ENCODE measurements at regions of chr2 and their contacts with region 1.

Region 1: GRCh38 chr2:56009758-56010458 is 86.3 kb upstream of the EFEMP1 start:
- H3K4me3 ChIP-seq: no peak overlapping the region
- H3K27ac ChIP-seq: no peak overlapping the region
- H3K4me1 ChIP-seq: no peaks in the 10 kb centered on the region
- CTCF ChIP-seq: no peak

Region 2: DNA sequence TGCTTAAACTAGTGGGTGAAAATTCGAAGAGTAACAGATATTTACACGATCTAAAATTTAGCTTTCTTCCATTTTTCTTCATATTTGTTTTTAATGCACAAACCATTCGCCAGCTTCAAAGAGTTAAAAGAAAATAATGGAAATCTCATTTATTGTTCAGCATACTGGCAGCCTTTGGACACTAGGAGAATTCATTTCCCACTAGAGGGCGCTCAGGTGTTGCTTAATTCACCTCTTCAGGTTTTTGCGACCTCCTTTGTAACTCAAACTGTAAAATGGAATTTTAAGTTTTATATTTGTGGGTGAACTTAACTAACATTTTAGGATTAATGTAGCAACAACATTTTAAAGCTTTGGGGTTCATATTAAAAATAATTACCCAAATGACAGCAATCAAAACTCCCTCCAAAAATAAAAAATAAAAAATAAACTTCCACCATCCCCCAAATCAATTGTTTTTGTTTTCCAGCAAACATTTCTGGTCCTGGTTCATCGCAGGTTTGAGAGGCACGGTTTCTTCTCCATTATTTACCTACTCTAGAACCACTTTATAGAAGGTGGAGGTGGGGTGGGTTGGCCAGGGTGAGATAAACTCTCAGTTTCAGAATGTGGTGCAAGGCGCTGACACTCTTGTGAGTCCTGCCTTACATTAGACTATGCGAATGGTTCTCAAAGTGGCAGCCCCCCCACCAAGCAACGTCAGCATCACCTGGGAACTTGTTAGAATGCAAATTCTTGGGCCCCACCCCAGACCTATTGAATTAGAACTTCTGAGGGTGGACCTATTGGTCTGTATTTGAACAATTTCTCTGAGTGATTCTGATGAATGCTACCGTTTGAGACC is 291.5 kb before region 1 on chr2:
- CTCF ChIA-PET with region 1: interaction called, 24 read pairs
- POLR2A ChIA-PET with region 1: no interaction called
- H3K4me3 ChIP-seq: no peak overlapping the region
- H3K27ac ChIP-seq: no peak overlapping the region
- H3K4me1 ChIP-seq: no peaks in the 10 kb centered on the region
- CTCF ChIP-seq: 0 out of 2 replicates have a peak, but pooled peaks have one; percentile 16

Region 3: DNA sequence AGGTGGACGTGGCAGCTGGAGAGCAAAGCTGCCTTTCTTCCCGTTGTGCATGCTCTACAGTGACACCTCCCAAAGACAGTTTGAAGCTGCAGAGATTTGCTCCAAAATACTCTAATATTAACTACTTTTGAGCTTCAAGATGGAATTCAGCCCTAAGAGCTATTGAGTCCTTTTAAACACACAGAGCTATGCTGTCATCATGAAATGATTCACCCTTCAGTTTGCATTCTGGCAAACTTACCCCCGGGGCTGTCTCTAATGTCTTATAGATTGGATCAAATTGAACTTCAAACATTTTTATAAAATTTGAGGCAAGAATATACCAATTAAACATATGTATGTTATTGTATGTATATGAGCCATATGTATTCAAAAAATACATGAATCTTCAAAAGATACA is 24.4 kb after region 1 on chr2:
- CTCF ChIA-PET with region 1: no interaction called
- POLR2A ChIA-PET with region 1: no interaction called
- H3K4me3 ChIP-seq: no peak overlapping the region
- H3K27ac ChIP-seq: no peak overlapping the region
- H3K4me1 ChIP-seq: no peaks in the 10 kb centered on the region
- CTCF ChIP-seq: no peak

Region 4: DNA sequence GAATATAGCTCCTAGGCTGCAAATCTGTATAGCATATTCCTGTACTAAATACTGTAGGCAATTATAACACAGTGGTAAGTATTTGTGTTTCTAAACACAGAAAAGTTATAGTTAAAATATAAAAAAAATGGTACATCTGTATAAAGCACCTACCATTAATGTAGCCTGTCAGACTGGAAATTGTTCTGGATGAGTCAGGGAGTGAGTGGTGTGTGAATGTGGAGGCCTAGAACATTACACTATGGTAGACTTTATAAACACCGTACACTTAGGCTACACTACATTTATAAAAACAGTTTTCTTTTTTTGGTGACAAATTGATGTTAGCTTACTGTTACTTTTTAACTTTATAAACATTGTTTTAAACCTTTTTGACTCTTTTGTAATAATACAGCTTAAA is 400.2 kb after region 1 on chr2:
- CTCF ChIA-PET with region 1: no interaction called
- POLR2A ChIA-PET with region 1: no interaction called
- H3K4me3 ChIP-seq: no peak overlapping the region
- H3K27ac ChIP-seq: no peak overlapping the region
- H3K4me1 ChIP-seq: no peaks in the 10 kb centered on the region
- CTCF ChIP-seq: no peak